Dendritic cell treated with granulocyte-macrophage colony-stimulating factor and Interleukin-4, amounts not matched to agents 40 ng/mL and 50 ng/mL, for 4 days (primary cell): ENCODE measurements at regions of chr2 and their contacts with region 1.

Region 1: DNA sequence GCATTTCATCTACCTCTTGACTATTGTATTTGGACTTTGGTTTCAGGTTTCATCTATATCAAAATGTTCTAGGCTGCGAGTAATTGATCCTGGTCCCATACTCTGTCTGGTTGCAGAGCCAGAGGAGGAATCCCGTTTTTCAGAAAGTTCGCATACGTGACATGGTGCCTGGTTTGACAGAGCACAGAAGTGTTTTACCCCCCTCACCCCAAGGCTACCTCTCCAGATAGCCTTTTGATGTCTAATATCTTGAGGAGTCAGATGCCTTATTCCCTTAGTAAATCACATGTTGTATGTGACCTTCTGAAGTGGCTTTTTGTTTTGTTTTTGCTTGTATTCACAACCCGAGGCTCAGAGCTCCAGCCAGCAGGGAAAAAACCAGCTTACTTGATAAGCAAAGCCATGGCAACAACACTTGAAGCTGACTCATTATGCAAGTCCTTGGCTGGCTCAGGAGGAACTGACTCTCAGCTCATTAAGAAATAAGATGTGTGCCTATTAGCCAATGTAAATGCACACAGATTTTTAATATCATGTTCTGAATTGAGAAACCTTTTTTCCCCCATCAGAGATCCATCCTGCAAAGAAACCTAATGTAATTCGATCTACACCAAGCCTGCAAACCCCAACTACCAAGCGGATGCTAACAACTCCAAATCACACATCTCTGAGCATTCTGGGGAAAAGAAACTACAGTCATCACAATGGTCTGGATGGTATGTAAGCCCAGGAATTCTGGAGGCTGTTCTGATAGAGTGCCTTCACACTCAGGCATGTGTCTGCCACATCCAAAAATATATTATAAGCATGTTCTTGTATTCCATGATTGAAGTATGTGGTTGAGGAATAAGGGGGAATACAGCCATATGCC is 41.4 kb downstream of the OXER1 start:
- H3K4me3 Mint-ChIP-seq: no peak overlapping the region
- H3K27ac Mint-ChIP-seq: peak overlapping the region; percentile 61
- H3K4me1 Mint-ChIP-seq: peaks cover 34% of the 10 kb centered on the region
- H3K27me3 Mint-ChIP-seq: no peaks in the 10 kb centered on the region

Region 2: GRCh38 chr2:42754021-42754775 is 31.6 kb after region 1 on chr2:
- intact Hi-C with region 1: loop called (anchors 1 kb)
- H3K4me3 Mint-ChIP-seq: no peak overlapping the region
- H3K27ac Mint-ChIP-seq: peak overlapping the region; percentile 82
- H3K4me1 Mint-ChIP-seq: peaks cover 70% of the 10 kb centered on the region
- H3K27me3 Mint-ChIP-seq: peaks cover 36% of the 10 kb centered on the region